Ascending aorta (tissue), 2 donors: ENCODE measurements at regions of chr9 and their contacts with region 1.

Region 1: GRCh38 chr9:70553707-70554673 is 139.5 kb upstream of the KLF9 start:
- DNase-seq: peak in 1 of 2 donors; percentile 76
- H3K4me3 ChIP-seq: no peak overlapping the region
- H3K27ac ChIP-seq: peak overlapping the region; percentile 42 to 51
- H3K4me1 ChIP-seq: peaks cover 0 to 14% of the 10 kb centered on the region in 2 donors
- H3K27me3 ChIP-seq: no peaks in the 10 kb centered on the region
- CTCF ChIP-seq: no peak

Region 2: GRCh38 chr9:70534061-70534460 is 19.9 kb before region 1 on chr9:
- intact Hi-C with region 1: loop called (anchors 2 kb)
- DNase-seq: no peak
- H3K4me3 ChIP-seq: no peak overlapping the region
- H3K27ac ChIP-seq: no peak overlapping the region
- H3K4me1 ChIP-seq: peaks cover 0 to 5% of the 10 kb centered on the region in 2 donors
- H3K27me3 ChIP-seq: no peaks in the 10 kb centered on the region
- CTCF ChIP-seq: no peak

Region 3: DNA sequence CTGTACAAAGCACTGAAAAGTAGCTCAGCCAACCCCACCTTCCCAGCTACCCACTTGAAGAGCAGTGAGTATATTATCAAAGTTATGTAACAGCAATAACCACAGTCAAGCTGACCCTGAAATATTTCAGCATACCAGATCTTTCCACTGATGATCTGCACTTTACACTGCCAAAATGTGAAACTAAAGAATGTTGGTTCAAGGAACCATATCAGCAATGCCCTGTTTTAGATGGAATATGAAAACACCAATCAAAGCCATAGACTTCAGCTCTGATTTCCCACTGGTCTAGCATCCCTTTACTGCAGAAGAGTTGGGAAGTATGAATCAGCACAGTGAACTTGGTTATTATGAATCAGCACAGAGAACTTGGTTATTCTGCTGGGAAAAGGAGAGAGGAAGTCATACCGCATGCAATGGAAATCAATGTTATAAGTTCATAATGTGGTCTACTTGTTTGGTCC is 1194.3 kb after region 1 on chr9:
- intact Hi-C with region 1: loop called (anchors 5 kb)
- DNase-seq: no peak
- H3K4me3 ChIP-seq: no peak overlapping the region
- H3K27ac ChIP-seq: peak overlapping the region in 1 of 2 donors; percentile 29
- H3K4me1 ChIP-seq: peaks cover 0 to 4% of the 10 kb centered on the region in 2 donors
- H3K27me3 ChIP-seq: no peaks in the 10 kb centered on the region
- CTCF ChIP-seq: no peak